ENCODE measurements at regions of chr5 and their contacts with region 1.

Region 1: GRCh38 chr5:132714456-132715307 is 22.7 kb downstream of the KIF3A start:
- DNase-seq: no peak
- ATAC-seq: no peak
- H3K4me3 Mint-ChIP-seq: peak overlapping the region; percentile 3
- H3K27ac Mint-ChIP-seq: peak overlapping the region; percentile 29
- H3K4me1 Mint-ChIP-seq: peaks cover 17% of the 10 kb centered on the region
- H3K27me3 Mint-ChIP-seq: no peaks in the 10 kb centered on the region

Region 2: GRCh38 chr5:132725745-132726144 is 11.1 kb after region 1 on chr5:
- CTCF ChIA-PET with region 1: interaction called, 11 read pairs
- POLR2A ChIA-PET with region 1: no interaction called
- DNase-seq: no peak
- ATAC-seq: no peak
- H3K4me3 Mint-ChIP-seq: no peak overlapping the region
- H3K27ac Mint-ChIP-seq: no peak overlapping the region
- H3K4me1 Mint-ChIP-seq: peaks cover 1% of the 10 kb centered on the region
- H3K27me3 Mint-ChIP-seq: no peaks in the 10 kb centered on the region

Region 3: DNA sequence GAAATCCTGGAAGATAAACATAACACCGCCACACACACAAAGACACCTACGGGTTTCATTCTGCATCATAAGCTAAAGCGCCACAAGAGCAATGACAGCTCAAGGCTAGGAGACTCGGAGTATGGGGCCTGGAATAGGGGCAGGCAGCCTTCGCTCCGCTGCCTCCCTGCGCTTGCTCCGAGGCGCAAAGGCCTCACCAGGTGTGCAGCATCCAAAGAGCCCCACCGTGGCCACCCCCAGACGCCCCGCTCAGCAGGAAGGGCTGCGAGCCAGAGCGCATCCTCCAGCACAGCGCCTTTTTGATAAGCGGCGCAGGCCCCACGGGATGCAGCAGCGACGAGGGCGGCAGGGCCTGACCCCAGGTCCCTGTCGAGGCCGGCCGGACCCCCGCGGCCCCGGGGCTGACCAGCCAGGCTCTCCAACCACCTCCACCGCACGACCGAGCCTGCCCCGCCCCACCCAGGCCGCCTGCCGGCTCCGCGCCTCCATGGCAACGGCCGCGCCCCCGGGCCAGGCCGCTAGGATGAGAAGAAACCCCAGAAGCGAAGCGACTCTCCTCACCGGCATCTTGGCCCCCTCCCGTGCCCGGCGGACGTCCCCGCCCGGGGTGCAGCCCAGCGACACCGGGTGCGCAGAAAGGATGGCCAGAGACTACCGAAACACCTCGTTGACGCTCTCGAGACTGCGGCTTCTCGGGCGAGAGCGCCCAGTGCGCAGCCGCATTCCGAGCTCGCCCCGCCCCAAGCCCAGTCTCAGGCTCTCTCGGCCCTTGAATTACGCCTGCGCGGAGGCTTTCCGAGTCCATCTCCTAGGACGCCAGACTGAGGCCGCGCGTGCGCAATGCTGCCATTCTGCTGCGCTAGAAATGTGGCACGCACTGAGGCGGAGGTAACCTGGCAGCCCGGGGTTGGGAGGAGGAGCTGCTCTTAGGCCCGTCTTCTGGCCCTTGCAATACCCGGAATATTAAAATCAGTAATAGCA is 22.5 kb after region 1 on chr5 and contains the start of gene KIF3A:
- CTCF ChIA-PET with region 1: interaction called, 11 read pairs
- POLR2A ChIA-PET with region 1: no interaction called
- DNase-seq: peak; percentile 99
- ATAC-seq: peak; percentile 94
- H3K4me3 Mint-ChIP-seq: peak within 1 kb of the TSS; percentile 86
- H3K27ac Mint-ChIP-seq: peak within 1 kb of the TSS; percentile 79
- H3K4me1 Mint-ChIP-seq: peaks cover 37% of the 10 kb centered on the region
- H3K27me3 Mint-ChIP-seq: peaks cover 8% of the 10 kb centered on the region
- total RNA-seq, gene KIF3A: 14.0 to 15.7 TPM

Measured in activated CD8-positive, alpha-beta T cell treated with anti-CD3 and anti-CD28 coated beads, Interleukin-2, amount 10 ng/mL, durations not matched to agents 7 days and 5 days (primary cell).